Posterior vena cava (tissue), 2 donors: ENCODE measurements at regions of chr22 and their contacts with region 1.

Region 1: GRCh38 chr22:27386186-27386585 is 415.4 kb downstream of the MN1 start:
- DNase-seq: no peak

Region 2: DNA sequence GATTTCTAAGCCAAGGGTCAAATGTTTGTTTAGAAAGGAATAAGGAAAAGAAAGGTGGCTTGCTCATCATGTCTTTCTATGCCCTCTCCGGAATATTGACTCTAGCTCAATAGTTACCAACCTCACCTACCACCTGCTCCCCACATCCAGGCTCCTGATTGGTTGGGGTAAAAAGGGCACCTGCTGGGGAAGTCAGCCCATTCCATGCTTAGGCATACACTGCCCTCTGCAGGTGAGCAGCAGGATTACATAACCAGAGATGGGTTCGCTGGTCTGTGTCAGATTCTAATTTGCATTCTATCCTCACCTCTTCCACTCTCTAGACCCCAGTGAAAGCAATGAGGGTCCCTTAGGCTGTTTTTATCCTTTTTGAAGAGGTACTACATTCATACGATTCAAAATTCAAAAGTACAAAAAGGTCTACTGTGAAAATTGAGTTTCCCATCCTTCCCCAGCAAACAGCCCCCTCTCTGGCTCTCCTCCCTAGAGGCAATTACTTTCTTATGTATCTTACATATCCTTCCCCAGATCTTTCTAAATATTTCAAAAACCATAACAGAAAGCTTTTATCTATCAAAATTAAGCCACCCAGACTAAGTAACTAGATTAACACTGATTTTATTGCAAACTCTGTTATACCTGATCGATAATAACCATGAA is 1055.1 kb before region 1 on chr22:
- intact Hi-C with region 1: no loop called
- DNase-seq: no peak

Region 3: DNA sequence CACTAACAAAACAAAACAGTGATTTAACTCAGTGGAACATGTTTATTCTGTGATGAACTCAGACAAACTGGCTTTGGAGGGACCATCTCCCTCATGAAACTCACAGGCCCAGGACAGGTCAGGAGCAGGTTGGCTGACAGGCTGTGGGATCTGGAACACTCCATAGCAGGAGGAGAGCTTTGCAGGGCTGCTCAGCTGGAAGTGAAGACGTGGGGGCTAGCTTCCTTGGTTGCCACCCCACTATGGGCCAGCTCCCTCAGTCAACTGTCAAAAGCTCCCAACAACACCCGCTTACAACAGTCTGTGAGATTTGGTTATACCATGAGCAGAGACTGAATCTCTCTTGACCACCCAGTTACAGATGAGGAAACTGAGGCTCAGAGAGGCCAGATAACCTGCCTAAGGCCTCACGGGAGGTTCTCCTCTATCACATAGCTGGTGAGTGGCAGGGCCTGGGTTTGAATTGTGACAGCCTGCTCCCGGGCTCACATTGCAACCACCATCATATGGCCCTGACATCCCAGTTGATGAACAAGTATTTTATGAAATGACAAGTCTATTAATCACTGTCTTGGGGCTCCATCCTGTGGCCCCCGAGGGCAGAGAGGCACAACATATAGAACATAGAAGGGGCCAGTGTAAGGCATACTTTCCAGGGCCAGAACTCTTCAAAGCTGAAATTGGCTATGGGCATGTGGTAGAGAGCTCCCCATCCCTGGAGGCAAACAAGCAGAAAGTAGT is 58.0 kb before region 1 on chr22:
- intact Hi-C with region 1: loop called in 1 of 2 experiments (anchors 2 kb)
- DNase-seq: no peak

Region 4: DNA sequence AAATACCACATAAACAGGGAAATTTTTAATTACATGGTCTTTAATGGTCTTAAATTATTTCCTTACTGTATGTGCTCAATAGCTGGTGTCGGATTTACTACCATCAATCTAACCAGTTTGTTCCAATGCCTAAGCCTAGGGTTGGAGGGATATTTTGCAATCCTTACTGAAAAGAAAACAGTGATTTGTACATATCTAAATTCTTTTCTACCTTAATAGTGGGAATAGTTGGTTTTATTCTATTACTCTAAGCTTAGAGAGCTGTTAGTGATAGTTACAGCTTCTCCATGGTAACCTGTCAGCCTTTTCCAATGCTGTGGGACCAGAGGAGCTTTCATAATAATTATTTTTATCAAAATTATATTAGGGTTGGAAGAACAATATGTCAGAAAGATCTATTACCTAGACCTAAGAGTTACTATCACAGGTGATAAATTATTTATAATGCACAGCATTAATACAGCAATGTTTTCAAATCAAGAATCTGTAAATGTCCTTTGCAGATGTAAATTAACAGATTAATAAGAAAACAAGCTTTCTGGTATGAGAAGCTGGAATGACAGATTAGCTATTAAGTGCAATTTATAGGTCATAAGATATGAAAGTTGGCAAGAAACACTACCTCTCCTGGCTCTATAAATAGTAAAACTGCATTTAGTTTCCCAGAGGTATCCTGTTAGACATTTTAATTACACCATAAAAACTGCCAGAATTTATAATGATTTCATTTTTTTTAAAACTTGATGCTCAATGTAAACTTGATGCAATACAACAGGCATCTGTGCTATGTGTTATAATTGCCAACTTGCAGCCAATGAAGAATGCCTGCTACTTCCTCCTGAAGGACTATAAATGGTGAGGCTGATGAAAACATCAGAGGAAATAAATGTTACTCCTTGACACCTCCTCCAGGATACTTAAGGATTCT is 794.9 kb after region 1 on chr22:
- intact Hi-C with region 1: no loop called
- DNase-seq: no peak

Region 5: GRCh38 chr22:29112102-29112501 is 1725.9 kb after region 1 on chr22:
- intact Hi-C with region 1: loop called in 1 of 2 experiments (anchors 5 kb)
- DNase-seq: no peak